ENCODE measurements at regions of chr12 and their contacts with region 1.

Region 1: GRCh38 chr12:54032627-54033100 is at the start of gene HOXC5:
- DNase-seq: peak; percentile 71 to 95 (median 79)
- H3K4me3 ChIP-seq: peak within 1 kb of the TSS in 2 of 4 donors; percentile 33 to 47
- H3K27ac ChIP-seq: peak within 1 kb of the TSS in 2 of 5 donors; percentile 88 to 95
- H3K4me1 ChIP-seq: peaks cover 13 to 54% of the 10 kb centered on the region in 2 donors
- H3K27me3 ChIP-seq: no peaks in the 10 kb centered on the region
- CTCF ChIP-seq: peak; percentile 85 to 99 (median 96)
- POLR2A ChIP-seq: no peak
- total RNA-seq, gene HOXC5: 0.36 to 1.9 (median 0.86) TPM

Region 2: GRCh38 chr12:54134850-54135249 is 102.2 kb after region 1 on chr12:
- intact Hi-C with region 1: loop called in 1 of 2 experiments (anchors 10 kb)
- DNase-seq: no peak
- H3K4me3 ChIP-seq: no peak overlapping the region
- H3K27ac ChIP-seq: no peak overlapping the region
- H3K4me1 ChIP-seq: no peaks in the 10 kb centered on the region
- H3K27me3 ChIP-seq: no peaks in the 10 kb centered on the region
- CTCF ChIP-seq: no peak
- POLR2A ChIP-seq: no peak

Measured in adrenal gland (tissue), 19 donors.